Left lung (tissue), 14 donors: ENCODE measurements at regions of chr6 and their contacts with region 1.

Region 1: DNA sequence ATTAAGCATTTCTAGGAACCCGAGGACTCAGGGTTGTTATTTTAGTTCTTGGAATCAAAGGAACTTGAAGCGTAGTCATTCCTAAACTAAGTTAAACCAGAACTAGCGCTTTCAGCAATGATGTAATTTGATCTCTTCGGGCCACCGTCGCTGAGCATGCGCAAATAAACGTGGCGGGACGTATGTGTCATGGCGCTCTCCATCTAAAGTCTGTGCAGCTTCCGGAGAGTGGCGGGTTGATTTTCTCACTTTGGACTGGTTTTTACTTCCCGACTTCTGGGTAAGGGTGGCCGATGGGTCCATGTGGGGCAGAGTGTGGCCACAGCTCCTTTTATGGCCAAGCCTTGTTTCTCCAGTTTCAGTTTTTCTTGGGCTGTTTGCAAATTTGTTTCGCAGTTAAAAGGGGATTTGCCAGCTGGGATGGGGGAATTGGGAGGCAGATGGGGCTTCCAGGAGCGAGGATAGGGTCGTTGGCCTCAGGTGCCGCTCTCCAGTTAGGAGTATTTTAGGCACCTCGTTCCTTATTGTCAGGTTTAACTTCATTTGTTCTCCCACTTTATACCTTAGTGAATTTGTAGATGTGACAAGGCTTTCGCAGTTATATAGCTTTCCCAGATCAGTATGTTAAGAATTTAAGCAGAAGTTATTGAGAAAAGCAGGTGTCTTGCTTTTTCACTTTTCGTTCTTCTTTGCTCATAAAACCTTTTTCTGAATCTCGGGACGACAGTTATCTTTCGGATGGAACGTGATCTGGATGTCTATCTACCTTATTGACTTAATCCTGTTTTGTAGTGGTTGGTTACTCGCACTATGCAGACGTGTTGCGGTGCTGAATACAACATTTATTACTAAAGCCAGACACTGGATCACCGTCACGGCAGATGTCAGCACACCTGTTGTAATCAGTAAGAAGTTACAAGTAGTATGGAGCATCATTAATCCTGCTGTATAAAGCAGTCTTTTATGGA is at the start of gene CDKAL1:
- DNase-seq: peak; percentile 85 to 93 (median 88)
- ATAC-seq: peak; percentile 94
- H3K4me3 ChIP-seq: peak within 1 kb of the TSS; percentile 66 to 78
- H3K27ac ChIP-seq: peak within 1 kb of the TSS; percentile 81 to 83
- H3K4me1 ChIP-seq: peaks cover 0 to 19% of the 10 kb centered on the region in 2 donors
- H3K27me3 ChIP-seq: no peaks in the 10 kb centered on the region
- CTCF ChIP-seq: no peak
- polyA plus RNA-seq, gene CDKAL1: 15.4 to 20.7 (median 18.6) TPM

Region 2: DNA sequence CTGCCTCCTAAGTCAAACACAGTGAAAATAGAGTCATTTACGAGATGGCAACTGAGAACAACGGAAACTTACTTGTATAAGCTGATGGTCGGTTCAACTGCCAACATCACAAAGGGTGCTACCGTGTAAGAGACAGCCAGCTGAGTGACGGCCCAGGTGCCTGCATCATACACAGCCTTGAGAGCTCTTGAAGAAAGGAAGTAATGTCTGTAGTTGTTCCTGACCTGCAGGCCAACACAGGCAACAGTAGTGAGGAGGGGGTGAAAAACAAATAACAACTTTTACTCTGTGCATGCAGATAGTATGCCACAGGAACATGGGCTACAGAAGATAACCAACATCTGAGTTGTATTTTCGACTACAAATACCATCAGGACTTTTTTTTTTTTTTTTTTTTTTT is 425.1 kb before region 1 on chr6:
- intact Hi-C with region 1: loop called in 1 of 2 experiments (anchors 10 kb)
- DNase-seq: no peak
- ATAC-seq: no peak
- H3K4me3 ChIP-seq: no peak overlapping the region
- H3K27ac ChIP-seq: no peak overlapping the region
- H3K4me1 ChIP-seq: no peaks in the 10 kb centered on the region
- H3K27me3 ChIP-seq: no peaks in the 10 kb centered on the region
- CTCF ChIP-seq: no peak

Region 3: DNA sequence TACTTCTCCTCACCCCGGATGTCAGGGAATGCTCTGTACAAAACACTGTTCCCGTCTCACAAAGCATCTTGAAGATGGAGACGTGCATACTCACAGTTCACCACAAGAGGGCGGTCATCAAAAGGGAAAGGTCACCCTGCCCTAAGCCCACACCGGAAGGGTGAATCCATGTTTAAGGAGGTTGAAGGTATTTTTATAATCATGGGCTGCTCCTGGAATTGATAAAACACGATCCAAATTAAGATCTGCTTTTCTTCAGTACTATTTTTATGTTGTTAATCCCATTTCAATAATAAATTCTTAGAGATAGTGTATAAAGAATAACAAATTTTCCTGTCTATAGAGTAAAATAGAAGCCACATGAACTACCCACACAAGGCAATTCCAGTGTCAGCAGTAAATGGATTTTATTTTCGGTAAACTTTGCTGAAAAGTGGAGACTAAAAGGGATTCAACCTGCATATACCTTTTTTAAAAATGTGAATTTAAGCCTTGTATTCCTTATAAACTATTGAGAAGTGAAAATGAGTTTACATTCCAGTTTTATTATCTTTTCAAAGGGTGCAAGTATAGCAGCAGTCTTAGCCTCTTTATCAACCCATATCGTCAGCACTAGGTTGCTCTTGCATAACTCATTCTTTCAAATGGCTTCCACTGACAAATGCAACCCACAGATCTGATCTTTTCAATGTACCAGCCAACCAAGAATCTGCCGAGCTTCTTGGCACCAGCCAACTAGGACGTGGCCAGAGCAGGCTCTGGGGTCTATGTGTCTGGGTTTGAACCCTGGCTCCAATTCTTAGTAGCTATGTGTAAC is 242.6 kb before region 1 on chr6:
- intact Hi-C with region 1: loop called in 1 of 2 experiments (anchors 5 kb)
- DNase-seq: peak in 3 of 4 donors; percentile 64 to 81 (median 66)
- ATAC-seq: peak; percentile 99
- H3K4me3 ChIP-seq: no peak overlapping the region
- H3K27ac ChIP-seq: no peak overlapping the region
- H3K4me1 ChIP-seq: peaks cover 0 to 10% of the 10 kb centered on the region in 2 donors
- H3K27me3 ChIP-seq: no peaks in the 10 kb centered on the region
- CTCF ChIP-seq: peak; percentile 85 to 95

Region 4: GRCh38 chr6:20377623-20378265 is 156.8 kb before region 1 on chr6:
- intact Hi-C with region 1: no loop called
- DNase-seq: no peak
- ATAC-seq: no peak
- H3K4me3 ChIP-seq: no peak overlapping the region
- H3K27ac ChIP-seq: no peak overlapping the region
- H3K4me1 ChIP-seq: no peaks in the 10 kb centered on the region
- H3K27me3 ChIP-seq: no peaks in the 10 kb centered on the region
- CTCF ChIP-seq: no peak